CD4-positive, alpha-beta T cell (primary cell): ENCODE measurements at regions of chr10 and their contacts with region 1.

Region 1: GRCh38 chr10:68901104-68901927 is at the start of gene DDX50:
- DNase-seq: peak; percentile 87 to 98 (median 92)
- ATAC-seq: peak; percentile 97
- H3K4me3 ChIP-seq: peak within 1 kb of the TSS; percentile 99
- H3K4me3 Mint-ChIP-seq: peak within 1 kb of the TSS; percentile 99
- H3K27ac ChIP-seq: peak within 1 kb of the TSS; percentile 100
- H3K27ac Mint-ChIP-seq: peak within 1 kb of the TSS; percentile 100
- H3K4me1 ChIP-seq: peaks cover 41% of the 10 kb centered on the region
- H3K4me1 Mint-ChIP-seq: peaks cover 61% of the 10 kb centered on the region
- H3K27me3 ChIP-seq: no peaks in the 10 kb centered on the region
- H3K27me3 Mint-ChIP-seq: no peaks in the 10 kb centered on the region
- CTCF ChIP-seq: no peak
- total RNA-seq, gene DDX50: 46.8 to 47.5 TPM

Region 2: DNA sequence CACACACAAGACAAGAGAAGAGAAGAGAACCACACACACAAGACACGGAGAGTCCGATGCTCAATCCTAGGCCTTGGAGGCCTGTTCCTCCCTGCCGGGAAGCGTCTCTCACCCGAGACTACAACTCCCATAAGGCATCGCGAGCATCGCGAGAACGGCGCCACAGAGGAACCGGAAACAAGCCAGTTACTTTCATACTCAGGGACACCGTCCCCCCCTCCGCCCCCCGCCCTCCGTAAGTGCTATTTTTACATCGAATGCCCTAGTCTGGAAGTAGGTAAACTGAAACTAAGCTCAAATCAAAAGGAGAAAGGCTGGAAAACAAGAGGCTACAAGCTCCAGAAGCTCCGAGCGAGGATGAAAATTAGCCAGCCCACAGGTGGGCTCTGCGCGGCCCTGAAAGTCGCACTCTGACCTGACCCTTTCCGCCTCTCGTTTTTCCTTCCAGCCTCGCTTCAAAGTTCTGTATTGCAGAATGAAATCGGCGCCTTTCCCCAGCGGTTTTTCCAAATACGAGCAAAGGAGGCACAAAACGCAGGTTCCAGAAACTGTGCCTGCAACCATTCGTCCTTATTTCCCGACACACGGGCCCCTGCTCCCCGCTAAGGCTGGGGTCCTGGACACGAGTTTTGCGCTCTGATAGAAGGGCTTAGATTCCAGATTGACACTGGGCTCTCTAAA is 1051.8 kb before region 1 on chr10:
- CTCF ChIA-PET with region 1: no interaction called
- POLR2A ChIA-PET with region 1: no interaction called
- intact Hi-C with region 1: loop called in 1 of 2 experiments (anchors 10 kb)
- DNase-seq: peak; percentile 87 to 96 (median 93)
- ATAC-seq: peak; percentile 99
- H3K4me3 ChIP-seq: peak overlapping the region; percentile 91
- H3K4me3 Mint-ChIP-seq: peak overlapping the region; percentile 94
- H3K27ac ChIP-seq: peak overlapping the region; percentile 78 to 93
- H3K27ac Mint-ChIP-seq: peak overlapping the region; percentile 91
- H3K4me1 ChIP-seq: peaks cover 12% of the 10 kb centered on the region
- H3K4me1 Mint-ChIP-seq: peaks cover 9% of the 10 kb centered on the region
- H3K27me3 ChIP-seq: no peaks in the 10 kb centered on the region
- H3K27me3 Mint-ChIP-seq: no peaks in the 10 kb centered on the region
- CTCF ChIP-seq: no peak

Region 3: DNA sequence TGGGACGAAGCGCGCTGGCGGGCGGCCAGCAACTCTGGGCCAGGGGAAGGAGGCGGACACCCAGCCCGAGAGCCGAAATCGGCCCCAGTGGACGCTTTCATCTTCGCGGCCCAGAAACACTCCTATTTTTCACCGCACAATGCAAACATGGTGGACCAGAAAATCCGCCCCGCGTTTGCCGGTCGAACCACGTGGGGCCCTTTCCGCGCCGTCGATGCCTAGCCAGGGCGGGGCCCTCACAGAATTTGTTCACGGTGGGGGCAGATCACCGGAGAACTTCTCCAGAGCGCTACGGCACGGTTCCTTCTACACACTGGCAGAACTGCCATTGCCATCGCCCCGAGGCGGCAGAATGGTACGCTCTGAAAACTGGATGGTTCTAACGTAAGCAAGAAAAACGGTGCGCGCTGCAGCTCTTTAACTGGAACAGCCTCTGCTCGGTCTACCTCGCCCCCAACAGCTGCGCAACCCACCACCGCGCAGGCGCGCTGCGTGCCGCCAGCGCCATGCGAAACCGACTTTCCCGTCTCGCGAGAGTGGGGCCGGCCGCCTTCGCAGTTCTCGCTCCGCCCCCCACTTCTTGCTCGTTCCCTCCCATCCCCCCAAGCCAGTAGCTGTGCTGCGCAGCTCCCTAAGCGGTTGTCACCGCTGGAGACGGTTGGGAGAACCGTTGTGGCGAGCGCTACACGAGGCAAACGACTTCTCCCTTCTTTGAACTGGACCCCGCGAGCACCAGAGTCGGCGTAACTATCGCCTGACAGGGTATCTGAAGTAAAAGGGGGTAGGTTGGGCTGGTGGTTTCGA is 569.7 kb before region 1 on chr10 and contains the start of gene HNRNPH3:
- CTCF ChIA-PET with region 1: no interaction called
- POLR2A ChIA-PET with region 1: interaction called, 15 read pairs
- intact Hi-C with region 1: loop called (anchors 10 kb)
- DNase-seq: peak; percentile 97 to 100 (median 98)
- ATAC-seq: peak; percentile 78
- H3K4me3 ChIP-seq: peak within 1 kb of the TSS; percentile 95
- H3K4me3 Mint-ChIP-seq: peak within 1 kb of the TSS; percentile 100
- H3K27ac ChIP-seq: peak within 1 kb of the TSS; percentile 94 to 97
- H3K27ac Mint-ChIP-seq: peak within 1 kb of the TSS; percentile 98
- H3K4me1 ChIP-seq: peaks cover 18% of the 10 kb centered on the region
- H3K4me1 Mint-ChIP-seq: peaks cover 52% of the 10 kb centered on the region
- H3K27me3 ChIP-seq: no peaks in the 10 kb centered on the region
- H3K27me3 Mint-ChIP-seq: no peaks in the 10 kb centered on the region
- CTCF ChIP-seq: no peak
- total RNA-seq, gene HNRNPH3: 227 to 228 TPM

Region 4: GRCh38 chr10:68550747-68551411 is 350.4 kb before region 1 on chr10:
- CTCF ChIA-PET with region 1: interaction called, 5 read pairs
- POLR2A ChIA-PET with region 1: no interaction called
- intact Hi-C with region 1: loop called in 1 of 2 experiments (anchors 2 kb)
- DNase-seq: peak in 8 of 14 experiments; percentile 6 to 72 (median 25)
- ATAC-seq: peak; percentile 76
- H3K4me3 ChIP-seq: no peak overlapping the region
- H3K4me3 Mint-ChIP-seq: no peak overlapping the region
- H3K27ac ChIP-seq: no peak overlapping the region
- H3K27ac Mint-ChIP-seq: no peak overlapping the region
- H3K4me1 ChIP-seq: no peaks in the 10 kb centered on the region
- H3K4me1 Mint-ChIP-seq: no peaks in the 10 kb centered on the region
- H3K27me3 ChIP-seq: no peaks in the 10 kb centered on the region
- H3K27me3 Mint-ChIP-seq: no peaks in the 10 kb centered on the region
- CTCF ChIP-seq: peak; percentile 71

Region 5: DNA sequence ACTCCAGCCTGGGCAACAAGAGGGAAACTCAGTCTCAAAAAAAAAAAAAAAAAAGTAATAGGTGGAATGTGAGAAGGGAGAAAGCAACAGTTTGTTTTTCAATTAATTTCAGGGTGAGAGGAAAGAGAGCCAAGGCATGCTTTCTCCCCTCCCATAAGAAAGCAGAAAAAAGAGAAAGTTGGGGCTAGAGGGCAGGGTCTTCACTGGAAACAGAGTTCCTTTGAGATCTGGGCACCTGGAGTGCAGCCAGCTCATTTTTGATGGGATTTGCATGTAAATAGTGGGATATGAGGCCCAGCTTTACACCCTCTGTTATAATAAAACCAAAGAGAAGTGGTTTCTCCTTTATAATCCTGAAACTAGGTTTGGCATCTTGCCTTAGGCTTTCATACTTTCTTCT is 87.8 kb before region 1 on chr10:
- CTCF ChIA-PET with region 1: no interaction called
- POLR2A ChIA-PET with region 1: no interaction called
- intact Hi-C with region 1: no loop called
- DNase-seq: no peak
- ATAC-seq: no peak
- H3K4me3 ChIP-seq: no peak overlapping the region
- H3K4me3 Mint-ChIP-seq: no peak overlapping the region
- H3K27ac ChIP-seq: no peak overlapping the region
- H3K27ac Mint-ChIP-seq: no peak overlapping the region
- H3K4me1 ChIP-seq: no peaks in the 10 kb centered on the region
- H3K4me1 Mint-ChIP-seq: no peaks in the 10 kb centered on the region
- H3K27me3 ChIP-seq: no peaks in the 10 kb centered on the region
- H3K27me3 Mint-ChIP-seq: no peaks in the 10 kb centered on the region
- CTCF ChIP-seq: no peak

Region 6: GRCh38 chr10:68831961-68832459 is 69.3 kb before region 1 on chr10:
- CTCF ChIA-PET with region 1: no interaction called
- POLR2A ChIA-PET with region 1: interaction called, 9 read pairs
- intact Hi-C with region 1: loop called in 1 of 2 experiments (anchors 5 kb)
- DNase-seq: no peak
- ATAC-seq: no peak
- H3K4me3 ChIP-seq: no peak overlapping the region
- H3K4me3 Mint-ChIP-seq: no peak overlapping the region
- H3K27ac ChIP-seq: no peak overlapping the region
- H3K27ac Mint-ChIP-seq: no peak overlapping the region
- H3K4me1 ChIP-seq: peaks cover 20% of the 10 kb centered on the region
- H3K4me1 Mint-ChIP-seq: peaks cover 19% of the 10 kb centered on the region
- H3K27me3 ChIP-seq: no peaks in the 10 kb centered on the region
- H3K27me3 Mint-ChIP-seq: no peaks in the 10 kb centered on the region
- CTCF ChIP-seq: no peak